ENCODE measurements at regions of chr3 and their contacts with region 1.

Region 1: DNA sequence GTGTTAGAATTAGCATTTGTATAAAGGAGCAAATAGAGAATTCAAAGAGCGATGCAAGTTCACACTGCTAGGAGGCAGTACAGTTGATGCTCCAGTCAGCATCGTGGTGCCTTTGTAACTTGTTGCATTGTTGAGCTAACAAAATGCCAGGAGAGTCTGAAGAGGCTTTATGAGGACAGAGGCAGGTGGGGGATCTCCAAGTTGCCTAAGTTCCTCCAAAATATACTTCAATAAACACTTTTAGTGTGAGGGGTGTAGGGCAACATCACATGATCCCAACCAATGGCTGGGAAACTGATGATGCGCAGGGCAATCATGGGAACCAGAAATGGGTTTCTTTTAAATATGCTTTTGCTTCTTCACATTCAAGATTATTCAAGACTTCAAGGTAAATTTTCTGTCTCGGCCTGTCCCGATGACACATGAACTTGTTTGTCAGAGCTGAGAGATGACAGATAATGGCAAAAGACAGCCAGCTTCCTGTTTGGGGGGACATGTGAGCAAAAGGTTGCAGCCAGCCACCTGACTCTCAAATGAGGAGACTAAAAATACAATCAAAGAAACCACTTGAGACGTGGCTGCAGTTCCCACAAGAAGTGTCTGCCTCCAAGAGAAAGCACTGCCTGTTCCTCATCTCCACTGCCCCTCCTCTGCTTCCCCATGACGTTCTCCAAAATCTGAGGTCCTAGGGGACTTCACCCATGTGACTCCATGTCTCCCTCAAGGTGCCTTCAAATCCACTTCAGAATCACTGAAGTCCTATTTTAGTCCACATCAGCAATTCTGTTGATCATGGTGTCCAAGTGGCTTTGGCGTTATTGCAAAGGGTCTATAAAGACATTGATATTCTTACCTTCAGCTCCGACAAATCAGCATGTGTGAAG is 39.3 kb downstream of the KLHL6 start:
- DNase-seq: peak; percentile 39 to 87
- ATAC-seq: peak; percentile 65 to 76 (median 71)
- H3K4me3 ChIP-seq: no peak overlapping the region
- H3K4me3 Mint-ChIP-seq: no peak overlapping the region
- H3K27ac ChIP-seq: peak overlapping the region; percentile 43
- H3K27ac Mint-ChIP-seq: peak overlapping the region; percentile 81 to 83
- H3K4me1 ChIP-seq: peaks cover 43% of the 10 kb centered on the region
- H3K4me1 Mint-ChIP-seq: peaks cover 57 to 59% of the 10 kb centered on the region in 2 donors
- H3K27me3 ChIP-seq: no peaks in the 10 kb centered on the region
- H3K27me3 Mint-ChIP-seq: no peaks in the 10 kb centered on the region
- CTCF ChIP-seq: peak; percentile 19

Region 2: DNA sequence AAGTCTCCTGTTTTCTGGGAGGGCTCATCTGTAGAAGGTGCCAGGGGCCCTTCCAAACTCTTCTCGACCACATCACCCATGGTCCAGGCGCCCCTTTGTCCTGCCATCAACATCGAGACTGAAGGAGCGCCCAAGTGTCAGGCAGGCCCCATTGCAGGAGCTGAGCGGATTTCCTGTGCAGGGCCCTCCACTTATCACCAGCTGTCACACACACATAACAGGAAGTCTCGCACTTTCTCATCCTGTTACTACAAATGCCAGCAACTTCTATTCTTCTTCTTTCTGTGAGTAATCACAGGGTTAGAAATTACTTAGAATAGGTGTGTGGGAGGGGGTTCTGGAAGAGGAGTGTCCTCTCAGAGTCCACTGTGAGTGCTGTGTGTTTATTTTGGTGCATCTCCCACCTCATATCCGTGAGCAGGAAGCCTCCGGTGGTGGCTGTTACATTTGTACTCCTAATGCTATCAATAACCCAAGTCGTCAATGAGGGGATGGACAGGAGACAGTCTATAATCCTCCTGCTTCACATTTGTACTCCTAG is 39.4 kb after region 1 on chr3 and contains the start of gene KLHL6:
- intact Hi-C with region 1: loop called (anchors 1 kb)
- DNase-seq: peak; percentile 69 to 86
- ATAC-seq: peak; percentile 89 to 96 (median 96)
- H3K4me3 ChIP-seq: peak within 1 kb of the TSS; percentile 57
- H3K4me3 Mint-ChIP-seq: peak within 1 kb of the TSS; percentile 98
- H3K27ac ChIP-seq: peak within 1 kb of the TSS; percentile 80
- H3K27ac Mint-ChIP-seq: peak within 1 kb of the TSS; percentile 97 to 99
- H3K4me1 ChIP-seq: peaks cover 36% of the 10 kb centered on the region
- H3K4me1 Mint-ChIP-seq: peaks cover 47 to 52% of the 10 kb centered on the region in 2 donors
- H3K27me3 ChIP-seq: no peaks in the 10 kb centered on the region
- H3K27me3 Mint-ChIP-seq: no peaks in the 10 kb centered on the region
- CTCF ChIP-seq: no peak
- total RNA-seq, gene KLHL6: 10.9 to 17.3 (median 13.6) TPM